ENCODE measurements at regions of chr6 and their contacts with region 1.

Region 1: DNA sequence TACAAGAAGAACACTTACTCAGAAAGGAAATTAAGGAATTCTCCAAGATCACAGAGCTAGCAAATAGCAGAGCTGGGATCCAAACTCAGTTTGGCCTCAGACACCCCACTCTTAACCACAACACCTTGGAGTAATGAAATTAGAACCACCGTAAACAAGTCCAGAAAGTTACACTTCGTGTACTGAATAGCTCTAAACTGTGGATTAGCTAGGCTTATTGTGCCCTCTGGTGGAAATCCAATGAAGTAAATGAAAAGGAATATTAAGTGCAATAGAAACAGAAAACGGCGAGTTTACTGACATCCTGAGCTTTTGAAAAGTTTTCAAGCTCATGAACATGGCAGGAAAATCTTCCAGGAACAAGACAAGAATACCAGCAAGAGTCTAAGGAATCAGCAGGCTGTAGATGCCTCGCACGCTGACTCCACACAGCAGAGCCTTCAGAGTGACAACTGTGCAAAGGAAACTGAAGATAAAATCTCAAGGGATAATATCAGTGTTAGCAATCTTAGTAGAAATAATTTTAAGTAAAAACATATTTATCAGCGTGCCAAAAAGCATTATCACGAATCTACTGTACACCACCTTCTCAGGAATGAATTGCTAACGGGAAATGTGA is 34.6 kb downstream of the FBXO5 start:
- DNase-seq: no peak
- H3K4me3 ChIP-seq: no peak overlapping the region
- H3K27ac ChIP-seq: no peak overlapping the region
- H3K4me1 ChIP-seq: peaks cover 0 to 4% (median 1%) of the 10 kb centered on the region in 4 experiments; a peak in 3 of 7 replicates
- H3K27me3 ChIP-seq: no peaks in the 10 kb centered on the region
- CTCF ChIP-seq: peak in 2 of 3 experiments; percentile 55 to 62; a peak in 2 of 4 replicates
- EP300 ChIP-seq: no peak
- POLR2A ChIP-seq: no peak
- RAD21 ChIP-seq: peak; percentile 86 to 93

Region 2: DNA sequence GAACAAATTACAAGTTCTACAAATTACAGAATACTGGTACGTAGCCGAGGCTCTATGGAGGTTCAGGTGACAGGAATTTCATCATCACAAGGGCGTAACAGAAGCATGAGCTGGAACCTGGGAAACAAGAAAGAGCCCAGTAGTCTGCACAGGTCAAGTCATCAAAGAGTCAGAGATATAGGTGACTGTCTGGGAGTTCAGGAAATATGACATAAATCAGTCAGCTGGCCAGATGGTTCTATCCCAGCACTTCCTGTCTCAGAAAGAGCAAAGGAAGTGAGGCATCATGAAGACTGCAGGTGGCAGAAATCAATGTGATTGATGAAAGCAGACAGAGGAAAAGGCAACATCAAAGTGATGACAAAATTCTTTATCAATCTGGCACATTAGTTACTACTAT is 227.3 kb before region 1 on chr6:
- CTCF ChIA-PET with region 1: interaction called, 20 read pairs
- POLR2A ChIA-PET with region 1: no interaction called
- DNase-seq: no peak
- H3K4me3 ChIP-seq: no peak overlapping the region
- H3K27ac ChIP-seq: no peak overlapping the region
- H3K4me1 ChIP-seq: no peaks in the 10 kb centered on the region
- H3K27me3 ChIP-seq: no peaks in the 10 kb centered on the region
- CTCF ChIP-seq: no peak
- EP300 ChIP-seq: no peak
- POLR2A ChIP-seq: no peak
- RAD21 ChIP-seq: no peak

Region 3: GRCh38 chr6:152750694-152751093 is 197.6 kb before region 1 on chr6 and contains the start of gene VIP:
- CTCF ChIA-PET with region 1: interaction called, 79 read pairs
- POLR2A ChIA-PET with region 1: interaction called, 3 read pairs
- DNase-seq: peak; percentile 36 to 54
- H3K4me3 ChIP-seq: no peak within 1 kb of the TSS
- H3K27ac ChIP-seq: no peak within 1 kb of the TSS
- H3K4me1 ChIP-seq: no peaks in the 10 kb centered on the region; a peak in 1 of 7 replicates
- H3K27me3 ChIP-seq: no peaks in the 10 kb centered on the region
- CTCF ChIP-seq: no peak
- EP300 ChIP-seq: no peak
- POLR2A ChIP-seq: no peak
- RAD21 ChIP-seq: peak in 1 of 2 experiments; percentile 30; a peak in 1 of 4 replicates
- total RNA-seq, gene VIP: not detected in 2 replicates

Region 4: GRCh38 chr6:152863618-152864326 is 84.5 kb before region 1 on chr6:
- CTCF ChIA-PET with region 1: interaction called, 71 read pairs
- POLR2A ChIA-PET with region 1: no interaction called
- DNase-seq: peak in 1 of 2 experiments; percentile 65
- H3K4me3 ChIP-seq: no peak overlapping the region
- H3K27ac ChIP-seq: no peak overlapping the region
- H3K4me1 ChIP-seq: no peaks in the 10 kb centered on the region
- H3K27me3 ChIP-seq: no peaks in the 10 kb centered on the region
- CTCF ChIP-seq: peak in 2 of 3 experiments; percentile 67 to 72; a peak in 3 of 4 replicates
- EP300 ChIP-seq: no peak
- POLR2A ChIP-seq: no peak
- RAD21 ChIP-seq: peak; percentile 92 to 93

Region 5: DNA sequence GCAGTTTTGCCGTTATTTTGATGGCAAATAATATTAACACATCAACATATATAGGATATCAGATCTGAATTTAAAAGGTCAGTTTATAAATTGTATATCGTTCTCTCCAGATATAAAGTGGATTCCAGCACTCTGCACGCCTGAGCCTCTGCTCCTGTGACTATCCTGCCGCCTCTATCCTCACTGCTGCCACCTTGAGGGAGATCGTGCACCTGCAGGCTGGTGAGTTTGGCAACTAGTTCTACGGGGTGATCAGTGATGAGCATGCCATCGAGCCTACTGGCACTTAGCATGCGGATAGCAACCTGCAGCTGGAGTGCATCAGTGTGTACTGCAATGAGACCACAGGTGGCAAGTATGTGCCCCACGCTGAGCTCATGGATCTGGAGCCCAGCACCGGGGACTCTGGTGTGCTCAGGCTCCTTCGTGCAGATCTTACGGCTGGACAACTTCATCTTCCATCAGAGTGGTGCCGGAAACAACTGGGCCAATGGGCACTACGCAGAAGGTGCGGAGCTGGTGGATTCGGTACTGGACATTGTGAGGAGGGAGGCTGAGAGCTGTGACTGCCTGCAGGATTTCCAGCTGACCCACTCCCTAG is 50.4 kb before region 1 on chr6:
- CTCF ChIA-PET with region 1: interaction called, 43 read pairs
- POLR2A ChIA-PET with region 1: no interaction called
- DNase-seq: peak; percentile 58 to 98
- H3K4me3 ChIP-seq: no peak overlapping the region
- H3K27ac ChIP-seq: no peak overlapping the region
- H3K4me1 ChIP-seq: no peaks in the 10 kb centered on the region; a peak in 1 of 7 replicates
- H3K27me3 ChIP-seq: peaks cover 0 to 3% (median 0%) of the 10 kb centered on the region in 4 experiments; a peak in 3 of 7 replicates
- CTCF ChIP-seq: peak; percentile 78 to 98 (median 96)
- EP300 ChIP-seq: no peak
- POLR2A ChIP-seq: no peak
- RAD21 ChIP-seq: peak; percentile 42 to 66

Region 6: DNA sequence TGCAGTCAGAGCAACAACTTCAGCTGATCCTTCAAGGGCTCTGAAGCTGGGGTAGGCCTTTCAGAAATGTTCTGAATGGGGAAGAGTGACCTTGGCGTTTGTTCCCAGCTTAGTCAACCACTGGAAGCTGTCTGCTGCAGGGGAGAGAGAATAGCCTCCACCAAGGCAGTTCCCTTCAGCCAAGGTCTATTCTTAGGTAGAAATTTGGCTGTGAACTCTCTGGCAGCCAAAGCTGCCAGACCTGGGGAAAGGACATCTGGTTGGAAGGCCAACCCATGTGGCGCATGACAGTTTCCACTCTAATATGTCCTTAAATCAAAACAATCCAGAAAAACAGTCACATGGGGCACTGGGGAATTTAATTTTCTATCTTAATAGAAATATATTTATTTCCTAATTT is 25.6 kb before region 1 on chr6:
- CTCF ChIA-PET with region 1: interaction called, 16 read pairs
- POLR2A ChIA-PET with region 1: no interaction called
- DNase-seq: no peak
- H3K4me3 ChIP-seq: no peak overlapping the region
- H3K27ac ChIP-seq: no peak overlapping the region
- H3K4me1 ChIP-seq: no peaks in the 10 kb centered on the region; a peak in 1 of 7 replicates
- H3K27me3 ChIP-seq: no peaks in the 10 kb centered on the region
- CTCF ChIP-seq: no peak
- EP300 ChIP-seq: no peak
- POLR2A ChIP-seq: no peak
- RAD21 ChIP-seq: no peak

Region 7: GRCh38 chr6:153013438-153013837 is 65.2 kb after region 1 on chr6:
- CTCF ChIA-PET with region 1: no interaction called
- POLR2A ChIA-PET with region 1: no interaction called
- DNase-seq: no peak
- H3K4me3 ChIP-seq: no peak overlapping the region
- H3K27ac ChIP-seq: no peak overlapping the region
- H3K4me1 ChIP-seq: no peaks in the 10 kb centered on the region
- H3K27me3 ChIP-seq: no peaks in the 10 kb centered on the region
- CTCF ChIP-seq: no peak
- EP300 ChIP-seq: no peak
- POLR2A ChIP-seq: no peak
- RAD21 ChIP-seq: no peak

Region 8: GRCh38 chr6:153099636-153100035 is 151.4 kb after region 1 on chr6:
- CTCF ChIA-PET with region 1: no interaction called
- POLR2A ChIA-PET with region 1: no interaction called
- DNase-seq: no peak
- H3K4me3 ChIP-seq: no peak overlapping the region
- H3K27ac ChIP-seq: no peak overlapping the region
- H3K4me1 ChIP-seq: no peaks in the 10 kb centered on the region
- H3K27me3 ChIP-seq: no peaks in the 10 kb centered on the region
- CTCF ChIP-seq: no peak
- EP300 ChIP-seq: no peak
- POLR2A ChIP-seq: no peak
- RAD21 ChIP-seq: no peak

Region 9: DNA sequence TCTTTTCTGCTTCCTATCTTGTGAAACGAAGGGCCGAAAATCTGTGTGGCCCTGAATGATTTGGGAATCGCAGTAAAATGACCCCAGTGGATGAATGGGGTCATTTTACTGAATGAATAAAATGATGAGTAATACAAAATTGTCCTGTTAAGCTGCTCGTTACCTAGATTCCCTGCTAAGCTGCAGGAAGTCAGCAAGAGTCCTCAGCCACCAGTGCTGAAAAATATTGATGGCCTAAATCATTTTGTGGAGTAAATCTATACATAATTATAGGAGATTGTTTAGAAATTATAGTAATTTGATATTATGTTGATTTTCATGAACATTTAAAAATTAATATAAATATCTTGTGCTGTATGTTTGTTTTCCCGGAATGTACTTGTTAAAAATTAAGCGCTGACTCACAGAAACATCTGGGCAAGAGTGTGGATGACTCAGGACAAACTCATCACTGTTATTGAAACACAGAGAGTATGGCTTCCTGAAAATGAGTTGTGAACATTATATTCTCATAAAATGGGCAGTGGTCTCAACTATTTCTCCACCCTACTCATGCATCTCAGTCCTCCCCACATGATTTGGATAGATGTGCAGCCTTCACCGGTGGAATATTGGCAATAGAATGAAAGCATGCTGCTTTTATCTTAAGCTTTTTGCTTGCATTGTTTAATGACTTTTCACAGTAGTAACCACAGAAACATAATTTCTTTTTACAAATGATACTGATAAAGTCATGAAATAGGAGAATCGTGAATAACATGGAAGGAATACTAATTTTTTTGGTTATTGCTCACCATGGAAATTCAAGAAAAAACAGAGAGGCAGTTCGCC is 219.0 kb after region 1 on chr6:
- CTCF ChIA-PET with region 1: no interaction called
- POLR2A ChIA-PET with region 1: no interaction called
- DNase-seq: no peak
- H3K4me3 ChIP-seq: no peak overlapping the region
- H3K27ac ChIP-seq: no peak overlapping the region
- H3K4me1 ChIP-seq: no peaks in the 10 kb centered on the region
- H3K27me3 ChIP-seq: no peaks in the 10 kb centered on the region
- CTCF ChIP-seq: no peak
- EP300 ChIP-seq: no peak
- POLR2A ChIP-seq: no peak
- RAD21 ChIP-seq: no peak

Region 10: GRCh38 chr6:153192943-153193885 is 245.0 kb after region 1 on chr6:
- CTCF ChIA-PET with region 1: no interaction called
- POLR2A ChIA-PET with region 1: no interaction called
- DNase-seq: no peak
- H3K4me3 ChIP-seq: no peak overlapping the region
- H3K27ac ChIP-seq: no peak overlapping the region
- H3K4me1 ChIP-seq: no peaks in the 10 kb centered on the region
- H3K27me3 ChIP-seq: peaks cover 0 to 1% (median 0%) of the 10 kb centered on the region in 4 experiments; a peak in 1 of 7 replicates
- CTCF ChIP-seq: no peak
- EP300 ChIP-seq: no peak
- POLR2A ChIP-seq: no peak
- RAD21 ChIP-seq: no peak

Measured in H1 (cell line).